CD4-positive, alpha-beta T cell (primary cell): ENCODE measurements at regions of chr9 and their contacts with region 1.

Region 1: DNA sequence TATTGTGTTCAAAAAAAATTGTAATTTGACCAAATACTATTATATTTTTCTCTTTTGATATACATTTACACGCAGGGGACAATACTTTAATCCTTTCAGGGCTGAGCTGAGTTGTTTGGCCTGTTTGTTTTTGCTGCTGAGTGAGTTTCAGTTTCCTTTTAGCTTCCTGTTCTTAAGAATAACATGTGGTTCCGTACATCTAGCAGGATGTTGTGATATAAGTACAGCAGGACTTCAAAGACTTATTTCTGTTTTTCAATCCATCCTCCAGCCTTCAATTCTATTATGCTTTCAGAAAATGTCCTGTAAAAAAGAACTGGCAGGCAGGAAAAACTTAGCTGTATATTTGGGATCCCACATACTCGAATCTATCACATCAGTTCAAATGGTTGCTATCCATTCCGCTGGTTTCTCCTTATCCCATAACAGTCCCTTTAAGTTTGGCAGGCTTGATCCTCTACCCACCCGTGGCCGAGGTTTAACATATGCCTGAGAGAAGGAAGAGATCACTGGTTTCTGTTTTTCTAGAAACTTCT is 1037.3 kb upstream of the ACO1 start:
- DNase-seq: peak in 7 of 14 experiments; percentile 14 to 88 (median 32)
- ATAC-seq: peak; percentile 95
- H3K4me3 ChIP-seq: peak overlapping the region; percentile 19
- H3K4me3 Mint-ChIP-seq: peak overlapping the region; percentile 69
- H3K27ac ChIP-seq: peak overlapping the region; percentile 77 to 92
- H3K27ac Mint-ChIP-seq: peak overlapping the region; percentile 98
- H3K4me1 ChIP-seq: peaks cover 10% of the 10 kb centered on the region
- H3K4me1 Mint-ChIP-seq: peaks cover 48% of the 10 kb centered on the region
- H3K27me3 ChIP-seq: no peaks in the 10 kb centered on the region
- H3K27me3 Mint-ChIP-seq: no peaks in the 10 kb centered on the region
- CTCF ChIP-seq: no peak

Region 2: DNA sequence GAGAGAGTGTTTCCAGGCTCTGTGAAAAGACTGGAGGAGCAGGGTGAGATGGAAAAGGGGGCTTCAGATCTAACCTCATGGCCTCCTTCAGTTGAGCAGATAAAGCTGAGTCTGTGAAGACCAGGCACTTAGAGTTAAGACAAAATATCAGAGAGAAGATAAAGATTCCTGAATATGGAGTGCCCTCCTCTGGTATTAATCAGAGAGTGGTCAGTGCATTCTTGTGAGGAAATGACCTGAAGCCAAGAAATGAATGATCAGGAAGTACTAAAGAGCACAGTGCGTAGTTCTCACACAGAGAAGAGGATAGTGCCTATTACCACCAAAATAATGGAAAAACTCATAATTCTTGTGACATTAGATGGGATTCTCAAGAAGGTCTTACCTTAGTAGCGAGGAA is 379.7 kb before region 1 on chr9:
- CTCF ChIA-PET with region 1: no interaction called
- POLR2A ChIA-PET with region 1: no interaction called
- intact Hi-C with region 1: no loop called
- DNase-seq: no peak
- ATAC-seq: no peak
- H3K4me3 ChIP-seq: no peak overlapping the region
- H3K4me3 Mint-ChIP-seq: no peak overlapping the region
- H3K27ac ChIP-seq: no peak overlapping the region
- H3K27ac Mint-ChIP-seq: no peak overlapping the region
- H3K4me1 ChIP-seq: no peaks in the 10 kb centered on the region
- H3K4me1 Mint-ChIP-seq: no peaks in the 10 kb centered on the region
- H3K27me3 ChIP-seq: no peaks in the 10 kb centered on the region
- H3K27me3 Mint-ChIP-seq: no peaks in the 10 kb centered on the region
- CTCF ChIP-seq: no peak

Region 3: GRCh38 chr9:31259824-31260223 is 87.3 kb before region 1 on chr9:
- CTCF ChIA-PET with region 1: no interaction called
- POLR2A ChIA-PET with region 1: interaction called, 3 read pairs
- intact Hi-C with region 1: loop called in 1 of 2 experiments (anchors 5 kb)
- DNase-seq: peak in 4 of 14 experiments; percentile 8 to 73 (median 72)
- ATAC-seq: peak; percentile 94
- H3K4me3 ChIP-seq: no peak overlapping the region
- H3K4me3 Mint-ChIP-seq: peak overlapping the region; percentile 11
- H3K27ac ChIP-seq: no peak overlapping the region
- H3K27ac Mint-ChIP-seq: peak overlapping the region; percentile 78
- H3K4me1 ChIP-seq: no peaks in the 10 kb centered on the region
- H3K4me1 Mint-ChIP-seq: peaks cover 17% of the 10 kb centered on the region
- H3K27me3 ChIP-seq: no peaks in the 10 kb centered on the region
- H3K27me3 Mint-ChIP-seq: no peaks in the 10 kb centered on the region
- CTCF ChIP-seq: no peak

Region 4: GRCh38 chr9:31323726-31324444 is 23.3 kb before region 1 on chr9:
- CTCF ChIA-PET with region 1: no interaction called
- POLR2A ChIA-PET with region 1: interaction called, 18 read pairs
- intact Hi-C with region 1: no loop called
- DNase-seq: peak in 5 of 14 experiments; percentile 14 to 58 (median 39)
- ATAC-seq: peak; percentile 79
- H3K4me3 ChIP-seq: no peak overlapping the region
- H3K4me3 Mint-ChIP-seq: peak overlapping the region; percentile 5
- H3K27ac ChIP-seq: peak overlapping the region; percentile 33 to 67
- H3K27ac Mint-ChIP-seq: peak overlapping the region; percentile 78
- H3K4me1 ChIP-seq: peaks cover 16% of the 10 kb centered on the region
- H3K4me1 Mint-ChIP-seq: peaks cover 42% of the 10 kb centered on the region
- H3K27me3 ChIP-seq: no peaks in the 10 kb centered on the region
- H3K27me3 Mint-ChIP-seq: no peaks in the 10 kb centered on the region
- CTCF ChIP-seq: no peak

Region 5: DNA sequence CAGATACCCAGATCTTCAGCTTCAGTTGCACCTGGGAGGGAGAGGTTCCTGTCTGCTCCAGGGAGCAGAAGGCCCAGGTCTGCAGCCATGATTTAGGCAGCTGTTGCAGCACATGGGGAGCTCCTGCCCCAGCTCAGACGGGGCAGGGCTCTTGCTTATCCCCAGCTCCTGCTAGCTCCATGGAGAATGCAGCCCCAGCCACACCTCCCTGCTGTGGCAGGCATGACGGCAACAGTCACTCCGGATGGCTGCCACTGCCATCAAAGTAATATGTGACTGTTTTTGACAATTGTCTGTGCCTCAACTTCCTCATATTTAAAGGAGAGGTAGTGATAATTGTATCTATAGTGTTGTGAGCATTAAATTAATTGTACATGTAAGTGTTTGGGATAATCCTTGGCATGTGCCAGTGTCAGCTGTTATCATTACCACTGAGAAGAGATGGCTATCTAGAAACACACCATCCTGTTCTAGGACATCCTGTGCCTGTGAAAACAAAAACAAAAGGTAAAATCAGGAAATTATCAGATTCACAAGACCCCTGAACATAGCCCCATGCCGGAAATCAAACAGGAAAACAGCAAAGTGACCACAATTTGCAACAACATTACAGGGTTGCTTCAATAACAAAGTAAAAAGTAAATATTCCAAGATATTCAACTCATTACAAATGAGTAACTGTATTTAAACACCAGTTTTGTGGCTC is 11.5 kb before region 1 on chr9:
- CTCF ChIA-PET with region 1: no interaction called
- POLR2A ChIA-PET with region 1: interaction called, 15 read pairs
- intact Hi-C with region 1: no loop called
- DNase-seq: peak in 2 of 14 experiments; percentile 9 to 70
- ATAC-seq: peak; percentile 34
- H3K4me3 ChIP-seq: no peak overlapping the region
- H3K4me3 Mint-ChIP-seq: peak overlapping the region; percentile 13
- H3K27ac ChIP-seq: peak overlapping the region in 1 of 2 donors; percentile 55
- H3K27ac Mint-ChIP-seq: peak overlapping the region; percentile 60
- H3K4me1 ChIP-seq: peaks cover 19% of the 10 kb centered on the region
- H3K4me1 Mint-ChIP-seq: peaks cover 20% of the 10 kb centered on the region
- H3K27me3 ChIP-seq: no peaks in the 10 kb centered on the region
- H3K27me3 Mint-ChIP-seq: no peaks in the 10 kb centered on the region
- CTCF ChIP-seq: no peak

Region 6: GRCh38 chr9:31394015-31394473 is 46.9 kb after region 1 on chr9:
- CTCF ChIA-PET with region 1: no interaction called
- POLR2A ChIA-PET with region 1: interaction called, 5 read pairs
- intact Hi-C with region 1: loop called in 1 of 2 experiments (anchors 5 kb)
- DNase-seq: no peak
- ATAC-seq: no peak
- H3K4me3 ChIP-seq: no peak overlapping the region
- H3K4me3 Mint-ChIP-seq: no peak overlapping the region
- H3K27ac ChIP-seq: no peak overlapping the region
- H3K27ac Mint-ChIP-seq: no peak overlapping the region
- H3K4me1 ChIP-seq: peaks cover 3% of the 10 kb centered on the region
- H3K4me1 Mint-ChIP-seq: peaks cover 33% of the 10 kb centered on the region
- H3K27me3 ChIP-seq: no peaks in the 10 kb centered on the region
- H3K27me3 Mint-ChIP-seq: no peaks in the 10 kb centered on the region
- CTCF ChIP-seq: no peak